Activated CD4-positive, alpha-beta memory T cell treated with anti-CD3 and anti-CD28 coated beads for 36 hours (primary cell): ENCODE measurements at regions of chr15 and their contacts with region 1.

Region 1: DNA sequence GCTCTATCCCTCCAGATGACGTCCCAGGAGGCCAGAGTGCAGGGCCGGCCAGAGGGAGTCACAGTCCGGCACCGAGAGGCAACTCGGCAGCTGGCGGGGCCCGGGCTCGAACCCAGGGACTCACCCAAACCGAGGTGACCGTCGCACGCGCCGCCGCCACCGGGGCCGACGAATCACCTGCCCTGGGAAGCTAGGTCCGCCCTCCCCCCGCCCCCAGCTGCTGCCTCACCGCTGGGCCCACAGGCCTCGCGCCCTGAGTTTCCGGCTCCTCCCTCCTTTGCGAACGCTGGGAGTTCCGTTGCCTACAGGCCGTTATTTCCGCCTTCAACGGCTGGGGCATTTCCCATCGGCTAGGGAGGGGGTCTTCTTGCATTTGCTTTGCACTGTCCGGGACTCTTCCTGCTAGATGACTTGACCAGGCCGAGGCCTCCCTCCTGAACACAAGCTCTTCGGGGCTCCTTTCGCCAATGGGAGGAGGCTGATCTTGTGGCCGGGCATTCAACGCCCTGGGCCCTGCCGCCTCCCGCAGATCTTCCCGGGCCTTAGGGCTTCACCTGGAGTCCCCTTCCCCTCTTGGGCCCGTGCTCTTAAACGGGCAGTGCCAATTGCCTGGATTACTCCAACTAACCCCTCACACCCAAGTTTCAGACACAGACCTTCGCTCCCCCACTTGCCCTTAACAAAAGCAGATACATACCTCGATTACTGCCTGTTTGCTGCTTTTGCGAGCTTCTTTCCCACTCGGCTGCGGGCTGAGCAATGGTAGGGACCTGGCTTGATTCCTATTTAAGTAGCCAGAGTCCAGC is at the start of gene SNUPN:
- DNase-seq: peak; percentile 97
- H3K4me3 Mint-ChIP-seq: peak within 1 kb of the TSS; percentile 98
- H3K27ac Mint-ChIP-seq: peak within 1 kb of the TSS; percentile 98
- H3K4me1 Mint-ChIP-seq: peaks cover 35% of the 10 kb centered on the region
- H3K27me3 Mint-ChIP-seq: no peaks in the 10 kb centered on the region
- total RNA-seq, gene SNUPN: 33.4 to 34.2 TPM

Region 2: GRCh38 chr15:75578948-75579920 is 46.5 kb before region 1 on chr15 and contains the start of gene PTPN9:
- CTCF ChIA-PET with region 1: interaction called, 4 read pairs
- POLR2A ChIA-PET with region 1: interaction called, 3 read pairs
- intact Hi-C with region 1: loop called (anchors 1 kb)
- DNase-seq: peak; percentile 84
- H3K4me3 Mint-ChIP-seq: peak within 1 kb of the TSS; percentile 91
- H3K27ac Mint-ChIP-seq: peak within 1 kb of the TSS; percentile 93
- H3K4me1 Mint-ChIP-seq: peaks cover 16% of the 10 kb centered on the region
- H3K27me3 Mint-ChIP-seq: no peaks in the 10 kb centered on the region
- total RNA-seq, gene PTPN9: 19.2 to 20.9 TPM

Region 3: GRCh38 chr15:75597667-75598341 is 27.9 kb before region 1 on chr15:
- CTCF ChIA-PET with region 1: interaction called, 13 read pairs
- POLR2A ChIA-PET with region 1: no interaction called
- intact Hi-C with region 1: no loop called
- DNase-seq: peak; percentile 65
- H3K4me3 Mint-ChIP-seq: no peak overlapping the region
- H3K27ac Mint-ChIP-seq: peak overlapping the region; percentile 43
- H3K4me1 Mint-ChIP-seq: peaks cover 18% of the 10 kb centered on the region
- H3K27me3 Mint-ChIP-seq: no peaks in the 10 kb centered on the region

Region 4: GRCh38 chr15:75639709-75640482 is 14.2 kb after region 1 on chr15 and contains the start of gene IMP3:
- CTCF ChIA-PET with region 1: interaction called, 31 read pairs
- POLR2A ChIA-PET with region 1: interaction called, 39 read pairs
- intact Hi-C with region 1: loop called (anchors 1 kb)
- DNase-seq: peak; percentile 98
- H3K4me3 Mint-ChIP-seq: peak within 1 kb of the TSS; percentile 86
- H3K27ac Mint-ChIP-seq: peak within 1 kb of the TSS; percentile 86
- H3K4me1 Mint-ChIP-seq: peaks cover 27% of the 10 kb centered on the region
- H3K27me3 Mint-ChIP-seq: no peaks in the 10 kb centered on the region
- total RNA-seq, gene IMP3: 71.7 to 72.4 TPM

Region 5: GRCh38 chr15:75647370-75648155 is 21.8 kb after region 1 on chr15 and contains the start of gene SNX33:
- CTCF ChIA-PET with region 1: interaction called, 3 read pairs
- POLR2A ChIA-PET with region 1: interaction called, 14 read pairs
- intact Hi-C with region 1: no loop called
- DNase-seq: peak; percentile 77
- H3K4me3 Mint-ChIP-seq: peak within 1 kb of the TSS; percentile 83
- H3K27ac Mint-ChIP-seq: peak within 1 kb of the TSS; percentile 65
- H3K4me1 Mint-ChIP-seq: peaks cover 44% of the 10 kb centered on the region
- H3K27me3 Mint-ChIP-seq: no peaks in the 10 kb centered on the region
- total RNA-seq, gene SNX33: 3.0 to 3.2 TPM

Region 6: GRCh38 chr15:75801859-75802593 is 176.3 kb after region 1 on chr15:
- CTCF ChIA-PET with region 1: no interaction called
- POLR2A ChIA-PET with region 1: no interaction called
- intact Hi-C with region 1: no loop called
- DNase-seq: peak; percentile 88
- H3K4me3 Mint-ChIP-seq: peak overlapping the region; percentile 43
- H3K27ac Mint-ChIP-seq: no peak overlapping the region
- H3K4me1 Mint-ChIP-seq: peaks cover 4% of the 10 kb centered on the region
- H3K27me3 Mint-ChIP-seq: peaks cover 34% of the 10 kb centered on the region